Activated CD4-positive, alpha-beta T cell treated with anti-CD3 and anti-CD28 coated beads for 36 hours (primary cell): ENCODE measurements at regions of chr13 and their contacts with region 1.

Region 1: DNA sequence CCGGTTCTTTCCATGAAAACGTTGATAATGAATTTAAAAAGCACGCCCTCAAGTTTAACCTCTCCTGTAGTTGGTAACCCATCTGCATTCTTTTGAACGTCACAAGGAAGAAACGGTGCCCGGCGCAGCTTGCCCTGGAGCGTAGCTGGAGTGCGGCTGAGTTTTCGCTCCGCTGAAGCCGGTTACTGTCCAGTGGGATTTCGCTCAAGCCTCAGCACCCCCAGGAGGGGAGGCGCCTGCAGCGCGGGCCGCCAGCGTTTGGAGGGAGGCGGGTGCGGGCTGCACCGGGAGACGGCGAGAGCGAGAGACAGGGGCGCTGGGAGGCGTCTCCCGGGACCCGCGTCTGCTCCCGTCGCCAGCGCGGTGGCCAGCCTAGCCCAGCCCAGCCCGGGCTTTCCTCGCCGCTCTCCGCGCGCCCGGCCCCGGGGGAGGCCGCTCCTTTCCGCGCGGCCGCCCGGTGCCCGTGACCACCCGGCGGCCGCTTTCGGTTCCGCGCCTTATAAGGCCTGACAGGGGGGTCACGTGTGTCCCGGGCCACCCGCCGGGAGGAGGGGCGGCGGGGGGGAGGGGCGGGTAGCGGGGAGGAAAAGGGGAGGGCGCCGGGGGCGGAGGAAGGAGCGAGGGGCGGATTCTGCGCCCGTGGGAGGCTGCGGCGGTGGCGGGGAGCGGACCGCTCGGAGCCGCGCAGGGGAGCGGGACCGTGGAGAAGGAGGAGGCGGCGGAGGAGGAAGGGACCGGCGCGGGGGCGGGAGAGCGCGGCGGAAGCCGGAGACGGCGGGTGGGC is 8.3 kb upstream of the DGKH start:
- DNase-seq: peak; percentile 92
- ATAC-seq: peak; percentile 77
- H3K4me3 Mint-ChIP-seq: peak overlapping the region; percentile 74
- H3K27ac Mint-ChIP-seq: peak overlapping the region; percentile 76
- H3K4me1 Mint-ChIP-seq: peaks cover 23% of the 10 kb centered on the region
- H3K27me3 Mint-ChIP-seq: peaks cover 5% of the 10 kb centered on the region

Region 2: GRCh38 chr13:40770934-40771618 is 1269.1 kb before region 1 on chr13 and contains the start of gene MRPS31:
- CTCF ChIA-PET with region 1: no interaction called
- POLR2A ChIA-PET with region 1: no interaction called
- intact Hi-C with region 1: loop called in 1 of 2 experiments (anchors 10 kb)
- DNase-seq: peak; percentile 97
- ATAC-seq: peak; percentile 99
- H3K4me3 Mint-ChIP-seq: peak within 1 kb of the TSS; percentile 89
- H3K27ac Mint-ChIP-seq: peak within 1 kb of the TSS; percentile 97
- H3K4me1 Mint-ChIP-seq: peaks cover 30% of the 10 kb centered on the region
- H3K27me3 Mint-ChIP-seq: no peaks in the 10 kb centered on the region
- total RNA-seq, gene MRPS31: 45.8 to 46.1 TPM

Region 3: DNA sequence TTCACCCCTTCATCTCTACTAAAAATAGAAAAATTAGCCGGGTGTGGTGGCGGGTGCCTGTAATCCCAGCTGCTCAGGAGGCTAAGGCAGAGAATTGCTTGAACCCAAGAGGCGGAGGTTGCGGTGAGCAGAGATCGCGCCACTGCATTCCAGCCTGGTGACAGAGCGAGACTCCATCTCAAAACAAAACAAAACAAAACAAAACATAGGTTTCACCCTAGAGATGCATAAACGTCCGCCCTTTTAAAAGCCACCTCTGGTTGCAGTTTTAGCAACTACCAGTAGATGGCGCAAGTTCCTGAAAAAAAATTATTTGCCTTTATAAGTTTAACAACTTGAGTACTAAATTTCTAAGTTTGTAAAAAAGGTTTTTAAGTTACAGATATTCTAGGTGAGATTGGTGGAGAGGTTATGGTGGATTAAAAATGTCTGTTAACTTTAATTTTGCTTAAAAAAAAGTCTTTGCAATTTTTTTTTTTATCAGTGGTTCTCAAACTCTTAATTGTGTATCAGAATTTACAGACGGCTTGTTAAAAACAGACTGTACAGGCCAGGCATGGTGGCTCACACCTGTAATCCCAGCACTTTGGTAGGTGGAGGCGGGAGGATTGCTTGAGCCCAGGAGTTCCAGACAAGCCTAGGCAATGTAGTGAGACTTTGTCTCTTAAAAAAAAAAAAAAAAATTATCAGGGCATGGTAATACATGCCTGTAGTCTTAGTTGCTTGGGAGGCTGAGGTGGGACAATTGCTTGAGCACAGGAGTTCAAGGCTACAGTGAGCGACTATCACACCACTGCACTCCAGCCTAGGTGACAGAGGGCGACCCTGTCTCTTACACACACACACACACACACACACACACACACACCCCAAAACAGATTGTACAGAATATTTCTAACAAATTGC is 687.0 kb before region 1 on chr13:
- CTCF ChIA-PET with region 1: no interaction called
- POLR2A ChIA-PET with region 1: no interaction called
- intact Hi-C with region 1: loop called in 1 of 2 experiments (anchors 10 kb)
- DNase-seq: peak; percentile 55
- ATAC-seq: peak; percentile 54
- H3K4me3 Mint-ChIP-seq: no peak overlapping the region
- H3K27ac Mint-ChIP-seq: peak overlapping the region; percentile 78
- H3K4me1 Mint-ChIP-seq: peaks cover 55% of the 10 kb centered on the region
- H3K27me3 Mint-ChIP-seq: no peaks in the 10 kb centered on the region

Region 4: GRCh38 chr13:41960639-41961465 is 79.3 kb before region 1 on chr13 and contains the start of gene VWA8:
- CTCF ChIA-PET with region 1: interaction called, 4 read pairs
- POLR2A ChIA-PET with region 1: no interaction called
- intact Hi-C with region 1: loop called in 1 of 2 experiments (anchors 1 kb)
- DNase-seq: peak; percentile 93
- ATAC-seq: peak; percentile 81
- H3K4me3 Mint-ChIP-seq: peak within 1 kb of the TSS; percentile 92
- H3K27ac Mint-ChIP-seq: peak within 1 kb of the TSS; percentile 99
- H3K4me1 Mint-ChIP-seq: peaks cover 60% of the 10 kb centered on the region
- H3K27me3 Mint-ChIP-seq: peaks cover 2% of the 10 kb centered on the region
- total RNA-seq, gene VWA8: 21.7 to 26.2 TPM

Region 5: GRCh38 chr13:42110410-42111155 is 70.4 kb after region 1 on chr13:
- CTCF ChIA-PET with region 1: no interaction called
- POLR2A ChIA-PET with region 1: no interaction called
- intact Hi-C with region 1: loop called in 1 of 2 experiments (anchors 2 kb)
- DNase-seq: peak; percentile 47
- ATAC-seq: peak; percentile 69
- H3K4me3 Mint-ChIP-seq: no peak overlapping the region
- H3K27ac Mint-ChIP-seq: peak overlapping the region; percentile 29
- H3K4me1 Mint-ChIP-seq: peaks cover 5% of the 10 kb centered on the region
- H3K27me3 Mint-ChIP-seq: no peaks in the 10 kb centered on the region